ENCODE measurements at regions of chr10 and their contacts with region 1.

Region 1: DNA sequence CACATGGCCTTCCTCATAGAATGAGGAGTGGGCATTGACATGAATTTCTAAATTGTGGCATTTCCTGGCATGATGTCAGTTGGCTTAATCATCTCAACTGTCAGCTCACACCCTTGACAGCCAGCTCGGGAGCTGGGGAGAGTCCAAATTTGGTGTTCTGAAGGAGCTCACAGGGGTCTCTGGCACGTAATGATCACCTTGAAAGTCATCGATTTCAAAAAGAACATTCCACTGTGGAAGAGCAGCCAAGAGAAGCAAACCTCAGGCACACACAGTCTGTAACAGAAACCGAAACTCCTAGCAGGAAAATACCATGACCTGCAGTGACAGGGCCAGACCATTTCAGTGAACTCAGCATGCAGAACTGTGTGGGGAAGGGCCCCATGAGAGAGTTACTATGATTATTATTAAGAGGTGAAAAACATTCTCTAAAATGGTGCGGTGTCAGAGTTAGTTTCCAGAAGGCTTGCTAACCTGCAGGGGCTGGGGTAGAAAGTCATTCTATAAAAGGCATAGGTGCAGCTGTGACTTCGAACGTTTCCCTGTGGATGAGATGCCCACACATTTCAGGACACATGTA is 26.4 kb upstream of the KLF6 start:
- DNase-seq: peak; percentile 82
- H3K4me3 Mint-ChIP-seq: peak overlapping the region; percentile 59
- H3K27ac Mint-ChIP-seq: no peak overlapping the region
- H3K4me1 Mint-ChIP-seq: peaks cover 86% of the 10 kb centered on the region
- H3K27me3 Mint-ChIP-seq: no peaks in the 10 kb centered on the region

Region 2: DNA sequence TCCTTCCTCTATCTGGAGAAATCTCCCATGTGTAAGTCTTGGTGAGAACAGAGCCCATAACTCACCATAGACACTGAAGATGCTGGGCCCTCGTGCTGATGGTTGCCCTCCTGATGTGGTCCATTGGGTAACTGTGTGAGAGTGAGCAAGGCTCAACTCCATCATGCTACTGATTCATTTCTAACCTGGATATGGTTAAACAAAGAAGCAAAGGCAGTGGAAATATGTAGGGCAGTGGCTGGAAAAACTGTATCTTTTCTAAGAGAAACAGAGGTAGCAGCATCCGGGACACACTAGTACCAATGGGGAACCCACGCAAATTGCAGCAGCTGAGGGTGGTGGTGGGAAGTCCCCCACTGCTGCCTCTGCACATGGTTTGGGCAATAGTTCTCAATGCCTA is 248.1 kb before region 1 on chr10:
- CTCF ChIA-PET with region 1: no interaction called
- POLR2A ChIA-PET with region 1: no interaction called
- intact Hi-C with region 1: loop called (anchors 1 kb)
- DNase-seq: peak; percentile 82
- H3K4me3 Mint-ChIP-seq: no peak overlapping the region
- H3K27ac Mint-ChIP-seq: peak overlapping the region; percentile 35
- H3K4me1 Mint-ChIP-seq: peaks cover 27% of the 10 kb centered on the region
- H3K27me3 Mint-ChIP-seq: no peaks in the 10 kb centered on the region

Region 3: GRCh38 chr10:3776796-3777571 is 34.4 kb before region 1 on chr10:
- CTCF ChIA-PET with region 1: interaction called, 5 read pairs
- POLR2A ChIA-PET with region 1: interaction called, 405 read pairs
- intact Hi-C with region 1: no loop called
- DNase-seq: peak; percentile 70
- H3K4me3 Mint-ChIP-seq: peak overlapping the region; percentile 67
- H3K27ac Mint-ChIP-seq: peak overlapping the region; percentile 83
- H3K4me1 Mint-ChIP-seq: peaks cover 77% of the 10 kb centered on the region
- H3K27me3 Mint-ChIP-seq: no peaks in the 10 kb centered on the region

Region 4: DNA sequence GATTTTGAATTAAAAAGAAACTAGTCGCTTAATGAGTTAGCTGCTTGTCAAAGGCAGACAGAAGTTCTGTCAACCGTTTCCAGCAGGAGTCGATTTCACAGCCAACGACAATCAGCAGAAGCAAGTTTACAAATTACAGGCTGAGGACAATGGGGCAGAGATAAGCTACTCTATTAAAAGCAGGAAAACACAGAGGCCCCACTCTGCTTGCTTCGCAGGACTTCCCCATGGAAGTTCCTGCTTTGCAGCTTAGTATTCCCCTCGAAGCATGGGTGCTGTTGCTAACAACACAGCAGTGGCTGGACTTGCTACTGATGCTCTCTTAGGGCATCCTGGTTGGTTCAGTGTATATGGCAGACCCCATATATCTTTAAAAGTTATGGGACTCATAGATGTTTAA is 24.4 kb after region 1 on chr10:
- CTCF ChIA-PET with region 1: interaction called, 3 read pairs
- POLR2A ChIA-PET with region 1: interaction called, 23 read pairs
- intact Hi-C with region 1: loop called (anchors 2 kb)
- DNase-seq: no peak
- H3K4me3 Mint-ChIP-seq: peak overlapping the region; percentile 43
- H3K27ac Mint-ChIP-seq: peak overlapping the region; percentile 80
- H3K4me1 Mint-ChIP-seq: peaks cover 72% of the 10 kb centered on the region
- H3K27me3 Mint-ChIP-seq: no peaks in the 10 kb centered on the region

Region 5: GRCh38 chr10:3887885-3888476 is 76.6 kb after region 1 on chr10:
- CTCF ChIA-PET with region 1: interaction called, 3 read pairs
- POLR2A ChIA-PET with region 1: interaction called, 16 read pairs
- intact Hi-C with region 1: no loop called
- DNase-seq: peak; percentile 87
- H3K4me3 Mint-ChIP-seq: peak overlapping the region; percentile 58
- H3K27ac Mint-ChIP-seq: peak overlapping the region; percentile 96
- H3K4me1 Mint-ChIP-seq: peaks cover 68% of the 10 kb centered on the region
- H3K27me3 Mint-ChIP-seq: no peaks in the 10 kb centered on the region

Region 6: DNA sequence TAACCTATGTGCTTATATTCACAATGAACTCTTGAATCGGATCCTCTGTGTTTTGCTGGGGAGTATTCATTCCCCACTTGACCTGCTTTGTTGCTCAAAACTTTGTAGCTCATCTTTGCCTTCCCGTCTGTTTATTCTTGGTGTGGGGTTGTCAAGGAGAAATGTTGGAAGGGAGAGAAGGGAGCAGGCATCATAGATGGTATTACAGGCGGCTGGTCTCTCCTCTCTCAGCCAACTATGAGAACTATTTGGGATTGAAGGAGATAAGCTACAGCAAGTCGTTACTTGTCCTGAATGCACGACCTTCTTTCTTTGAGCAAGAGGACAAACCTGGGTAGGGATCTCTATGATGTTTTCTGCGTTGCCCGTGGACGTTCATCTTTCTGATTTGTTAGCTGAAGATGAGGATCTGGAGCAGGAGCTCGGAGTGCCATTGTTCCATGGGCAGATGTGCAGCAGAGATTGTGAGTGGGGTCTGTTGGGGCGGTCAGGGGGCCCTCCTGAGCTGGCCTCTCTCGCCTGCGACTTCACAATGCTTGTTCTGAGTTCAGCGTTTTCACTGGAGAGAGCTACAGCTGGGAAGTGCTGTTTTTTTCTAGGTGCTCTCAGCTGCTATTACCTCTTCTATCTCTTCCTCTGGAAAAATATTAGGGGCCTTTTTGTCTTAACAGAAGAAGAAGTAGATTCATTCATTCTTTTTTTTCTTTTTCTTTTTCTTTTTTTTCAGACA is 100.5 kb after region 1 on chr10:
- CTCF ChIA-PET with region 1: no interaction called
- POLR2A ChIA-PET with region 1: no interaction called
- intact Hi-C with region 1: no loop called
- DNase-seq: no peak
- H3K4me3 Mint-ChIP-seq: no peak overlapping the region
- H3K27ac Mint-ChIP-seq: no peak overlapping the region
- H3K4me1 Mint-ChIP-seq: no peaks in the 10 kb centered on the region
- H3K27me3 Mint-ChIP-seq: no peaks in the 10 kb centered on the region

Region 7: GRCh38 chr10:4067531-4067930 is 256.1 kb after region 1 on chr10:
- CTCF ChIA-PET with region 1: no interaction called
- POLR2A ChIA-PET with region 1: interaction called, 3 read pairs
- intact Hi-C with region 1: loop called (anchors 2 kb)
- DNase-seq: peak; percentile 57
- H3K4me3 Mint-ChIP-seq: no peak overlapping the region
- H3K27ac Mint-ChIP-seq: no peak overlapping the region
- H3K4me1 Mint-ChIP-seq: peaks cover 3% of the 10 kb centered on the region
- H3K27me3 Mint-ChIP-seq: no peaks in the 10 kb centered on the region